H1 (cell line): ENCODE measurements at regions of chr3 and their contacts with region 1.

Region 1: DNA sequence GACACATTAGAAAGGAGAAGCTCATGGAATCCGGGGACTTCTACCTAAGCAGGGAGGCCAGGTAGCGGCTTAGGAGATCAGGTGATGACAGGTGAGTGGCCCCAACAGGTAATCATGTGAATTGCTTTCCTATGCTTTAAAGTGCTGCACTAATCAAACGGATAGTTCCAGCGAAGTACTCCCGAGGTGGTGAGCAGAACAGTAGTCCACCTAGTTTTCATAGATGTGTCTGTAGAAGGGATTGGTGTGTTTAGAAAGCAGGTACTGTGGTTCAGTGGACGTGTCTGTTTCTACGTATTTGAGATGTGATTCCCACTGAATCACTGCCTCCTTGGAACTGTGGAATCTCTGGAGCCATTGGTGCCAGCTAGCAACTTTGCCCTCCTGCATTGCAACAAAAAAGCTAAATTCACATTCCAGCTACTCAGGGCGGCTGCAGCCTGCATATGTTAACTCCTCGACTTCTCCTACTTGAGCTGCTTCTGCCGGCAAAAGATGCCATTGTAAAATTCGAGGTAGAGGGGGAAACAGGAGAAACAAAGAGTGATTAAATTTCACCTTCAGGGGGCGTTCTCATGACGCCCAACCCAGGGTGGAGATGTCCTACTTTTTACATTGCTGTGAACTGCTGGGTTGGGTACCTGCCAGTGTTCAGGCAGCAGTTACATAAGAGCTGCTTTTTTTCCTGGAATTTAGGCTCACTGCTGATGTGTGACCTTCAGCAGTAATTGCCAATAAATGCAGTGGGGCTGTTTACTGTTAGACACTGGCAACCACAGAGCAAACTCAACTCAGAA is 227.3 kb downstream of the ITPR1 start:
- DNase-seq: peak in 1 of 2 experiments; percentile 52
- H3K4me3 ChIP-seq: no peak overlapping the region; a peak in 2 of 8 replicates
- H3K27ac ChIP-seq: no peak overlapping the region
- H3K4me1 ChIP-seq: peaks cover 3 to 11% (median 6%) of the 10 kb centered on the region in 4 experiments; a peak in 4 of 7 replicates
- H3K27me3 ChIP-seq: no peaks in the 10 kb centered on the region
- CTCF ChIP-seq: peak; percentile 22 to 60 (median 59)
- EP300 ChIP-seq: no peak
- POLR2A ChIP-seq: no peak
- RAD21 ChIP-seq: peak; percentile 79 to 81

Region 2: DNA sequence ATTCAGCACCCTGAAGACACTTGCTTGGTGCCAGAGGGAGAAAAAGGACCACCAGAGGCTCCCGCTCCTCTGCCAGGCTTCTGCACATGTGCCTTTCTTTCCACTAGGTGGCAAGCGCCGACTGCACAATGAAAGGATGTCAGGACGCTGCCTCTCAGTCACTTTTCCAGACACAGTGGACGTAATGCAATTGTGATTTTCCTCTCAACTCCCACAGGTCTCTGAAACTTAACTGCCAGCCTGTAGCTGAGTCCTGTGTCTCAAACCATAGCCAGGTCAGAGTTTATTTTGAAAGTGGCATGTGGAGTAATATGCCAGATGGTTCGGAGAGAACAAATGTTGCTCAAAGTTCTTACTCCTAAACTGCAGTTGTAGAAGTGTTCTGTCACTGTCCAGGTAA is 64.4 kb before region 1 on chr3:
- CTCF ChIA-PET with region 1: interaction called, 10 read pairs
- POLR2A ChIA-PET with region 1: no interaction called
- DNase-seq: peak; percentile 44 to 64
- H3K4me3 ChIP-seq: no peak overlapping the region
- H3K27ac ChIP-seq: no peak overlapping the region
- H3K4me1 ChIP-seq: peaks cover 0 to 3% (median under 1%) of the 10 kb centered on the region in 4 experiments; a peak in 2 of 7 replicates
- H3K27me3 ChIP-seq: no peaks in the 10 kb centered on the region
- CTCF ChIP-seq: peak; percentile 87 to 98 (median 97)
- EP300 ChIP-seq: no peak
- POLR2A ChIP-seq: no peak
- RAD21 ChIP-seq: peak; percentile 98

Region 3: DNA sequence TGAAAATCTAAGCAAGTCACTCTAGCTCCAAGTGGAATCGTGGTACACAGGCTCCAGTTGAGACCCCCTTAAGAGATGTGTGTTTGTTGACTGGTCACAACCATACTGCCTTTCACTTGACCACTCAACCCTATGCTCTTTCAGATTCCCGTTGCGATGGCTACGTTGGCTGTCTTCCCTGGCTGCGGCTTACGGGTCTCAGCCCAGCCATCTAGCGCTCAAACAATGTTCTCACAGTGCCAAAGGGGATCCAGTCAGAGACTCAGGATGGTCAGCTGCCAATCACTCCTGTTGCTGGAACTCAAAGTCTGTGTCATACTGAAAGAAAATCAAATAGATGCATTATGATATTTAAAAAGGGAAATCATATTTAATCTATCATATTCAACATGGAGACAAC is 10.2 kb after region 1 on chr3:
- CTCF ChIA-PET with region 1: interaction called, 28 read pairs
- POLR2A ChIA-PET with region 1: interaction called, 4 read pairs
- DNase-seq: no peak
- H3K4me3 ChIP-seq: no peak overlapping the region
- H3K27ac ChIP-seq: no peak overlapping the region
- H3K4me1 ChIP-seq: peaks cover 0 to 5% (median 2%) of the 10 kb centered on the region in 4 experiments; a peak in 6 of 7 replicates
- H3K27me3 ChIP-seq: no peaks in the 10 kb centered on the region
- CTCF ChIP-seq: no peak
- EP300 ChIP-seq: no peak
- POLR2A ChIP-seq: no peak
- RAD21 ChIP-seq: no peak

Region 4: DNA sequence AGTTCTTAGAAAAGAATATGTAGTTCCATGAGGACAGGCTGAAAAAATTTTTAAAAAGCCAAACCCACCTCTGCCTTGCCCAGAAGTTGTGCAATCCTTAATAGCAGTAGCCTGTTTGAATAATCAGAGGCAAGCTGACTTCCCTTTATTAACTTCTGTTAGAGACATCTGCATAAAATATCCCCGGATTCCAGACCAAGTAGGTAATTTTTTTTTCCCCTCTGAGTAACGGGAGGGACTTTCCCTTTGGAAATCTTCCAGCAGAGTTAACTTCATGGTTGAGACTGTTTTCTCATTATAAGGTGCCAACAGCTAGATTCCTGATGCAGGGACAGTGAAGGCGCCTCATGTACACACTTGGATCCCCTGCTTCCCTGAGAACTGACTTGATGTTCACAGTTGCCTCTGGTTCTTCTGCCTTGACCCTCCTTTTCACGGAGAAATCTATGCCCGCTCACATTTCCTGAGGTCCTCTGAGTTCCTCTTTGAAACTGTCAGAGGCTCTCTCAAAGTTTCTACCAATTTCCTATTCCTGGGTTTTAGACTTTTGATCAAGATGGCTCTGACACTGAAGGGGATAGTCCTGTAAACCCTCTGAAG is 31.1 kb after region 1 on chr3:
- CTCF ChIA-PET with region 1: interaction called, 13 read pairs
- POLR2A ChIA-PET with region 1: no interaction called
- DNase-seq: no peak
- H3K4me3 ChIP-seq: no peak overlapping the region
- H3K27ac ChIP-seq: no peak overlapping the region
- H3K4me1 ChIP-seq: peaks cover 0 to 3% (median 3%) of the 10 kb centered on the region in 4 experiments; a peak in 3 of 7 replicates
- H3K27me3 ChIP-seq: no peaks in the 10 kb centered on the region
- CTCF ChIP-seq: no peak
- EP300 ChIP-seq: no peak
- POLR2A ChIP-seq: no peak
- RAD21 ChIP-seq: no peak

Region 5: DNA sequence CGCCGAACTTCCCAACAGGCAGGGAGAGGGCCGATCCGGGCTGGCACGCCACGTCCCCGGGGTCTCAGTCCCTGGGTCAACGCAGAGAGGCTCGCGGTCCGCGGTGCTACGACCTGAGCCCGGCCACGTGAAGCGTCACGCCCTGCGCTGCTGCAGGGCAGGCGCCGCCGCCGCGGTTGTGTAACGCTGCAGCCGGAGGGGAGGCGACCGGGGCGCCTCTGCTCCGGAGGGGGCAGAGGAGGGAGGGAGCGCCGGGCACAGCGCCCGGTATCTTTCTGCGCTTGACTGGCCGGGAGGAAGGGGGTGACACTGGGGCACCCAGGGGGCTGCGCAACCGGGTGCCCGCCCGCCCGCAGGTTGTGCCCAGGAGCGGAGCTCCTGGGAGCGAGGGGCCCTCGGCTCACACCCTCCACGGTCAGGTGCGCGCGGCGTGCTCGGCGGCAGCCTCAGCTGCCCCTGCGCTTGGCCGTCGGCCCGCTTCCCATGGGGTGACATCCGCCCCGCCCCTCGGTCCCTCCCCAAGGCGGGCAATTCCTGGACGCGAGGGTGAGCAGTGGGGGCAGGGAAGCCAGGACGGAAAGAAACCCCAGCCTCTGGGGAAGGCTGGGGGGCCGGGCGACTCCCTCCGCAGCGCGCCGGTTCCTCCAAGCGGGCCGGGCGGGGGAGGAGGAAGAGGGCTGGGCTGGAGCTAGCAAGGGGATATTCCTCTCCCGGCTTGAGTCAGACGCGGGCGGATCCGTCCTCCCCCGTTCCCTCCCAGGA is 257.9 kb after region 1 on chr3:
- CTCF ChIA-PET with region 1: interaction called, 34 read pairs
- POLR2A ChIA-PET with region 1: interaction called, 3 read pairs
- DNase-seq: peak; percentile 70 to 85
- H3K4me3 ChIP-seq: peak overlapping the region; percentile 51 to 71 (median 58)
- H3K27ac ChIP-seq: no peak overlapping the region
- H3K4me1 ChIP-seq: peaks cover 2 to 8% (median 4%) of the 10 kb centered on the region in 4 experiments; a peak in 5 of 7 replicates
- H3K27me3 ChIP-seq: peaks cover 4 to 36% (median 22%) of the 10 kb centered on the region in 4 experiments
- CTCF ChIP-seq: no peak
- EP300 ChIP-seq: no peak
- POLR2A ChIP-seq: no peak
- RAD21 ChIP-seq: 0 out of 4 replicates have a peak, but pooled peaks of 1 of the 2 experiments have one; percentile 3

Region 6: DNA sequence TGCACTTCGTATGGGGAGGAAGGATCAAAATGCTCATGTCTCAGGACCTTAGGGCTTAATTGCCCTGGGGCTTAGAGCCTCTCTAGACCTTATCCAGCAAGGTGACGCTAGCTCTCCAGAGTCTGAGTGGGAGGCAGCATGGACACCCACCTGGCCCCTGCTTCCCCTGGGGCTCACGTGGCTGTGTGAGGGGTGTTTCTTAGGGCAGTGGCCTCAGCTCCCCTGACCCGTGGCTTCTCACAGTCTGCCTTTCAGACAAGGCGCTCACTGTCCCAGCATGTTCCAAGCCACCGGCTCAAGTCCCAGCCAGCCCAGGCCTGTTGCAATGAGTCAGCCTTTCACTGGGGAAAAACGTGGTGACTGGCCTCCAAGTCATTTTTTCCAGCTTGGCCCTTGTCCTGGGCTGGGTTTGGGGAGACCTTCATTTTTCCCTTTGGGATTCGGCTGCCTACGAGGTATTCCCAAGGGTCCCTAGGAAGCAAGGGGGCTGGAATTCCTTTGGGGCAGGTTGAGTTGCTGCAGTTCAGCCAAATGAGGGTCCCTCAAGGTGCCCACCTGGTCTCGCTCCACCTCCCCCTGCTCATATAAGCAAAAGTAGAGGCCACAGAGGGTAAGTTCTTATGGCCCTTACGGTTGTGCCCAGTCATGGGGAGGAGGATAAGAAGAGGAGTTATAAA is 274.5 kb after region 1 on chr3:
- CTCF ChIA-PET with region 1: interaction called, 11 read pairs
- POLR2A ChIA-PET with region 1: no interaction called
- DNase-seq: no peak
- H3K4me3 ChIP-seq: no peak overlapping the region
- H3K27ac ChIP-seq: no peak overlapping the region
- H3K4me1 ChIP-seq: peaks cover 0 to 3% (median 1%) of the 10 kb centered on the region in 4 experiments; a peak in 5 of 7 replicates
- H3K27me3 ChIP-seq: no peaks in the 10 kb centered on the region; a peak in 1 of 7 replicates
- CTCF ChIP-seq: no peak
- EP300 ChIP-seq: no peak
- POLR2A ChIP-seq: no peak
- RAD21 ChIP-seq: no peak

Region 7: DNA sequence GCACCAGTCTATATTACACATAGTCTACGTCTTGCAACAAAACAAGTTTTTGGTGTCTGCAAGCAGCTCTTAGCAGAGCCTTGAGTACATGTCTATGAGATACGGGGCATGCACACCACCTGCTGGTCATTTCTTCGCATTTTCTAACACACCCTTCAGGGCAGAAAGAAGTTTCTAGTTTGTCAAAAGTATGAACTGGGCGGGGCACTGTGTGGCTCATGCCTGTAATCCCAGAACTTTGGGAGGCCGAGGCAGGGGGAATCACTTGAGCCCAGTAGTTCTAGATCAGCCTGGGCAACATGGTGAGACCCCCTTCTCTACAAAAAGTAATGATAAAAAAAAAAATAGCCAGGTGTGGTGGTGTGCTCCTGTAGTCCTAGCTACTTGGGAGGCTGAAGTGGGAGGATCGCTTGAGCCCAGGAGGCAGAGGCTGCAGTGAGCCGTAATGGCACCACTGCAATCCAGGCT is 337.4 kb after region 1 on chr3:
- CTCF ChIA-PET with region 1: interaction called, 10 read pairs
- POLR2A ChIA-PET with region 1: no interaction called
- DNase-seq: peak in 1 of 2 experiments; percentile 5
- H3K4me3 ChIP-seq: no peak overlapping the region
- H3K27ac ChIP-seq: no peak overlapping the region
- H3K4me1 ChIP-seq: no peaks in the 10 kb centered on the region
- H3K27me3 ChIP-seq: no peaks in the 10 kb centered on the region
- CTCF ChIP-seq: peak in 2 of 3 experiments; percentile 51 to 54; a peak in 3 of 4 replicates
- EP300 ChIP-seq: no peak
- POLR2A ChIP-seq: no peak
- RAD21 ChIP-seq: peak; percentile 67 to 72